ENCODE measurements at regions of chr2 and their contacts with region 1.

Region 1: GRCh38 chr2:198296665-198297308 is 492.4 kb downstream of the PLCL1 start:
- DNase-seq: peak; percentile 76
- ATAC-seq: peak; percentile 83
- H3K4me3 Mint-ChIP-seq: no peak overlapping the region
- H3K27ac Mint-ChIP-seq: no peak overlapping the region
- H3K4me1 Mint-ChIP-seq: no peaks in the 10 kb centered on the region
- H3K27me3 Mint-ChIP-seq: peaks cover 9% of the 10 kb centered on the region

Region 2: DNA sequence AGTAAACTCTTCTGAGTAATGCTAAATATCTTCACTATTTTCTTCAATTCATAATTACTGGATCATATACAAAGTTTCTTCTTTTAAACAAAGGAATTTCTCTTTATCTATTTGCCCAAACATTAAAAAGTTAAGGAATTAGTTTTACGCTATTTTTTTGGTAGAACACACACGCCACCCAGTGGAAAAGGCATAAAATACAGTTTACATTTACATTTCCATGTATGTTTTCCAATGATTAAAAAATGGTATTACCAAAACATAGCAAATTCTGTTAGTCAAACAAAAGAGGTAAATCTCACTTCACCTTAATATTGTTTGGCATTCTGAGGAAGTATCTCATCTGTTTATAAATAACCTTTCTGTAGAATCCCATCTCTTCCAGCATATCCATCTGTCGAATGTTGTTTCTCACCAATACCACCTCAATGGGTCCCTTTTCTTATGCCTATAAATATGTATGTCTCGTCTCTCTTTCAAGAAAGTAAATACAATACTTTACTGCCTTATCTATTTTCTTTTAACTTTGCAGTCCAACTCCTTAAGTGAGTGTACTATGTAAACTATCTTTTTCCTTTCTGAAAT is 518.9 kb before region 1 on chr2:
- CTCF ChIA-PET with region 1: interaction called, 12 read pairs
- POLR2A ChIA-PET with region 1: no interaction called
- intact Hi-C with region 1: no loop called
- DNase-seq: peak; percentile 51
- ATAC-seq: no peak
- H3K4me3 Mint-ChIP-seq: no peak overlapping the region
- H3K27ac Mint-ChIP-seq: no peak overlapping the region
- H3K4me1 Mint-ChIP-seq: no peaks in the 10 kb centered on the region
- H3K27me3 Mint-ChIP-seq: peaks cover 6% of the 10 kb centered on the region

Region 3: DNA sequence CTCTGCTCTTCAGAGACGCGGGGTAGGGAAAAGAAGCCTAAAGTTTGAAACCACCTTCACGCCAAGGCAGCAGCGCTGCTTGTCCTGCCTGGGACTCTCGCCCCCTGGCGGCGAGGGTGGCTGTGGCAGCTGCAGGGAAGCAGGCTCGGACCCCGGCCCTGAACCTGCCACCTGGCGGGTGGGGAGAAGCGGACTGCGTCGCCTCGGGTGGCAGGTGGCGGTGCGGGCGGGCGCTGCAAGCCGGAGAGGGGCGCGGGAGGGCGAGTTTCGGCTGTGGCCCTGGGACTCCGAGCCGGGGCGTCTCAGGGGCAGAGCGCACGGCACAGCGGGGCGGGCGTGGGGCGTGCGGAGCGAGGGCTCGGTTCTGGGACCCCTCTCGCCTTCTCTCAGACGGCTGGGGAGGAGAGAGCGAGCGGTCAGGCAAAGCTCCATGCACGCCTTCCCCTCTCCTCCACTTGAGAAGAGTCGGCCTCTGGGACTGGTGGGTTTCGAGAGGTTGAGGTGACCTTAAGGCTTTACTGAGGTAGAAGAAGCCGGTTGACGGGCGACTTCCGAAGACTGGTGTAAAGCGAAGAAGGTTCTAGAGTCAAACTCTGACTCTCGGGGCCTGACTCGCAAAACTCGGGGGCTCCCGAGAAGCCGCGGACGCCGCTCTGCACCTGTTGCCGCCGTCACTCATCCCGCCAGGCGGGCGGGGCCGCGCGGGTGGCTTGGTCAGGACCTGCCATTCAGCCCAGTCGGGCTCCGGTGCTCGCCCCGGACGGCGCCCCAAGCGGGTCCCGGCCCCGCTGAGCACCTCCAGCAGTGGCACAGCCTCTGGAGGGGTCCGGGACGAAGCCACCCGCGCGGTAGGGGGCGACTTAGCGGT is 510.5 kb before region 1 on chr2:
- CTCF ChIA-PET with region 1: interaction called, 12 read pairs
- POLR2A ChIA-PET with region 1: no interaction called
- intact Hi-C with region 1: no loop called
- DNase-seq: peak; percentile 87
- ATAC-seq: peak; percentile 82
- H3K4me3 Mint-ChIP-seq: peak overlapping the region; percentile 67
- H3K27ac Mint-ChIP-seq: no peak overlapping the region
- H3K4me1 Mint-ChIP-seq: peaks cover 2% of the 10 kb centered on the region
- H3K27me3 Mint-ChIP-seq: peaks cover 17% of the 10 kb centered on the region

Region 4: GRCh38 chr2:198053776-198054698 is 242.8 kb before region 1 on chr2:
- CTCF ChIA-PET with region 1: no interaction called
- POLR2A ChIA-PET with region 1: no interaction called
- intact Hi-C with region 1: loop called in 1 of 2 experiments (anchors 5 kb)
- DNase-seq: peak; percentile 70
- ATAC-seq: peak; percentile 95
- H3K4me3 Mint-ChIP-seq: no peak overlapping the region
- H3K27ac Mint-ChIP-seq: peak overlapping the region; percentile 7
- H3K4me1 Mint-ChIP-seq: peaks cover 29% of the 10 kb centered on the region
- H3K27me3 Mint-ChIP-seq: no peaks in the 10 kb centered on the region

Region 5: GRCh38 chr2:198127627-198128026 is 169.2 kb before region 1 on chr2:
- CTCF ChIA-PET with region 1: interaction called, 27 read pairs
- POLR2A ChIA-PET with region 1: no interaction called
- intact Hi-C with region 1: loop called (anchors 1 to 5 kb)
- DNase-seq: peak; percentile 71
- ATAC-seq: peak; percentile 72
- H3K4me3 Mint-ChIP-seq: no peak overlapping the region
- H3K27ac Mint-ChIP-seq: no peak overlapping the region
- H3K4me1 Mint-ChIP-seq: peaks cover 8% of the 10 kb centered on the region
- H3K27me3 Mint-ChIP-seq: no peaks in the 10 kb centered on the region

Region 6: DNA sequence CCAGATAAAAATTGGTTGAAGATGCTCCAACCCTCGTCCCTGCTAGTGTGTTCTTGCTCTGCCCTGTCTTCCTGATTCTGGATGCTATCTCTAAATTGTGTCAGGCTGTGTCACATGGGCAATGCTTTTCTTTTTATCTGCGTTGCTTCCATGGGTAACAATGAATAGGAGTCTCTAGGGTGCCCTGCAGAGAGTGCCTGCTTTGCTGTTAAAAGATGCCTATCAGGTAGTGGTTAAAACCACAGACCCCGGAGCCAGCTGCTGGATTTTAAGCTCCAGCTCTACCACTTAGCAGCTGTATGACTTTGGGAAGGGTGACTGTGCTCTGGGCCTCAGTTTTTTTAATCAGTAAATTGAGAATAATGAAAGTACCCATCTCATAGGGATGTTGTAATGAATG is 152.1 kb before region 1 on chr2:
- CTCF ChIA-PET with region 1: interaction called, 4 read pairs
- POLR2A ChIA-PET with region 1: no interaction called
- intact Hi-C with region 1: loop called in 1 of 2 experiments (anchors 5 kb)
- DNase-seq: no peak
- ATAC-seq: no peak
- H3K4me3 Mint-ChIP-seq: no peak overlapping the region
- H3K27ac Mint-ChIP-seq: no peak overlapping the region
- H3K4me1 Mint-ChIP-seq: peaks cover 12% of the 10 kb centered on the region
- H3K27me3 Mint-ChIP-seq: no peaks in the 10 kb centered on the region

Region 7: GRCh38 chr2:198309673-198310280 is 13.0 kb after region 1 on chr2:
- CTCF ChIA-PET with region 1: interaction called, 27 read pairs
- POLR2A ChIA-PET with region 1: no interaction called
- intact Hi-C with region 1: no loop called
- DNase-seq: peak; percentile 69
- ATAC-seq: no peak
- H3K4me3 Mint-ChIP-seq: no peak overlapping the region
- H3K27ac Mint-ChIP-seq: no peak overlapping the region
- H3K4me1 Mint-ChIP-seq: no peaks in the 10 kb centered on the region
- H3K27me3 Mint-ChIP-seq: peaks cover 33% of the 10 kb centered on the region

Region 8: DNA sequence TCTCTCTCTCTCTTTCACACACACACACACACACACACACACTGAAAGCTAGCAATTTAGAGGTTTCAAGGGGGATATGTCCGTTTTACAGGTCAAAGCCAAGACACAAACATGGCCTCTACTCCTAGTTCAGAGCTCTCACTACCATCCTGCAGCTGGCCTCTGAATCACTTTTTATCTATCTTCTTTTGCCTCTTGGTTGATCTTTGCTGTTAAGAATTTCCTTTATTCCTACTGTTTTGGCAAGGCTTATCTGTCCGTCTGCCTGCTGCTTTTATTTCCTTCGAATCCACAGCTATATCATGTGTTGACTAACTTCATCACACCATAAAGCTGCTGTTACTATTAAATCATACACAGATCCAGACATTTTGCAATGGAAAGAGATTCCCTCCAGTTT is 50.6 kb after region 1 on chr2:
- CTCF ChIA-PET with region 1: no interaction called
- POLR2A ChIA-PET with region 1: no interaction called
- intact Hi-C with region 1: no loop called
- DNase-seq: no peak
- ATAC-seq: no peak
- H3K4me3 Mint-ChIP-seq: no peak overlapping the region
- H3K27ac Mint-ChIP-seq: no peak overlapping the region
- H3K4me1 Mint-ChIP-seq: no peaks in the 10 kb centered on the region
- H3K27me3 Mint-ChIP-seq: peaks cover 18% of the 10 kb centered on the region